Activated CD4-positive, alpha-beta T cell treated with anti-CD3 and anti-CD28 coated beads, Interleukin-2, amount 10 ng/mL, durations not matched to agents 24 days and 14 days (primary cell): ENCODE measurements at regions of chr2 and their contacts with region 1.

Region 1: DNA sequence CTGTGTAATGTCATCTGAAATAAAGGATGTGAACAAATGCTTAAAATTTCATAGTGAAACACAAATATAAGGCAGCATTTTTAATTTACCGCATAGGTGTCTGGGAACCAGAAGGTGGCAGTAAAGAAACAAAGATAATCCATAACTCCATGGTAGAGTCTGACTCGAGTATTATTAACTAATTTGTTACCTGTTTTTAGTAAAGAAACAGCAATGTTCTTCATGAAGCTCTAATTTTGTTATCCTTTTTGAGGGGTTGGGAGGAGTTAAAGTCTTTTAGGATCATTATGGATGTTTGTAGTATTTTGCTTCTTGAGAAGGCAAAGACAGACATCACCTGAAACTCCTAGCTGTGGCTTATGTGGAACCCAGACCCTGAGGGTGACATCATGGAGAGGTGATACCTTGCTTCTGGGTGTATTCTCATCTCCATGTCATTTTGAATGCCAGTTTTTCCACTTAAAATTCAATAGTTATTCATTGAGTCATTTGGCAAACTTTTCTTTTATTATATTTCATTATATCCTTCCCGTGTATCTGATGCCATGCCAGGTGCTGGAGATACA is 286.2 kb upstream of the EPAS1 start:
- DNase-seq: no peak
- H3K4me3 Mint-ChIP-seq: no peak overlapping the region
- H3K27ac Mint-ChIP-seq: no peak overlapping the region
- H3K4me1 Mint-ChIP-seq: peaks cover 16% of the 10 kb centered on the region
- H3K27me3 Mint-ChIP-seq: no peaks in the 10 kb centered on the region

Region 2: DNA sequence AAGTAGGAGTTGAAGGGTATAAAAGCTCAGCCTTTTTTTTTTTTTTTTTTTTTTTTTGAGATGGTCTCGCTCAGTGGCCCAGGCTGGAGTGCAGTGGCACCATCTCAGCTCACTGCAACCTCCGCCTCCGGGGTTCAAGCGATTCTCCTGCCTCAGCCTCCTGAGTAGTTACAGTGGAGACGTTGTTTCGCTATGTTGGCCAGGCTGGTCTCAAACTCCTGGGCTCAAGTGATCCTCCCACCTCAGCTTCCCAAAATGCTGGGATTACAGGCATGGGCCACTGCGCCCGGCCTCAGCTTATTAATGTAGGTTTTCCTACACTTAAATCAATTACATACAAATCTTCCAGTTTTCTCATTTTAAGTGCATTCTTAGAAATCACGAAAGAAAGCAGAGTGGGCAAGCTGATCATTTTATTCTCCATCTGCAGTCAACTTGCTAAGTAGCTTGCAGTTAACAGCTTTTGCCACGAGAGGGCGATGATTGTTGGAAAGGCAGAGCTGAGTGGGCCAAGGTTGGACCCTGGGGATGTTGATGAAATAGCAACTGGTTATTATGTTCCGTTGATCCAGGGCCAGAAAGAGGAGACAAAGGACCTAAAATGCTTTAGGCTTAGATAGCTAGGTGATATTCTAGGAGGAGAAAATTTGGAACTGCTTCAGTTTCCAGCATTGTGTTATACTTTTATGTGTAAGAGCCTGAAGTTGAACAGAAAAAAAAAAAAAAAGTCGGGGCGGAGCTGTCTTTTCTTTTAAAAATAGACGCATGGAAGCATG is 51.8 kb after region 1 on chr2:
- intact Hi-C with region 1: loop called (anchors 2 kb)
- DNase-seq: peak; percentile 92
- H3K4me3 Mint-ChIP-seq: no peak overlapping the region
- H3K27ac Mint-ChIP-seq: no peak overlapping the region
- H3K4me1 Mint-ChIP-seq: peaks cover 20% of the 10 kb centered on the region
- H3K27me3 Mint-ChIP-seq: no peaks in the 10 kb centered on the region

Region 3: GRCh38 chr2:47344890-47345589 is 1334.0 kb after region 1 on chr2:
- intact Hi-C with region 1: no loop called
- DNase-seq: no peak
- H3K4me3 Mint-ChIP-seq: no peak overlapping the region
- H3K27ac Mint-ChIP-seq: no peak overlapping the region
- H3K4me1 Mint-ChIP-seq: peaks cover 2% of the 10 kb centered on the region
- H3K27me3 Mint-ChIP-seq: peaks cover 27% of the 10 kb centered on the region